Endothelial cell of umbilical vein (primary cell): ENCODE measurements at regions of chr10 and their contacts with region 1.

Region 1: GRCh38 chr10:87771871-87772500 is 46.0 kb downstream of the ATAD1 start:
- DNase-seq: peak; percentile 57
- H3K4me3 ChIP-seq: no peak overlapping the region
- H3K27ac ChIP-seq: no peak overlapping the region
- H3K4me1 ChIP-seq: peaks cover 17% of the 10 kb centered on the region
- H3K27me3 ChIP-seq: no peaks in the 10 kb centered on the region
- CTCF ChIP-seq: peak; percentile 21 to 35
- POLR2A ChIP-seq: no peak

Region 2: DNA sequence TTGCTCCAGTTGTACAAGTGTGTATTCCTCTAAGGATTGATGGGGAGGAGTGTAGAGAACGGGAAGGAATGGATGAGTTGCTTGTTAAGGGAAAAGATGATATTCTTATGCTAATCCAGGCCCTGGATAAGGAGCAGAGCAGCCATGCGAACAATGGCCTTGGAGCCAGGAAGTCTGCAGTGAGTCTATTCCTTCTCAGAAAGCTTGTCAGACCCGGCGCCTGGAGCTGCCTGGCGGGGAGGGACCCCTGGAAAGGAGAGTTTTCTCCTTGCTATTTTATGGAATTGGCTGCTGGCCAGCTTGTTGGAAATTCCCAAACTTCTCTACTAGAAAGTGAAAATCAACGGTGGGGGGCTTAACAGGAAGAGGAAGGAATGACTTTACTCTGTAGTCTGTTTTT is 903.6 kb before region 1 on chr10:
- CTCF ChIA-PET with region 1: no interaction called
- POLR2A ChIA-PET with region 1: no interaction called
- dilution Hi-C with region 1: no loop called
- intact Hi-C with region 1: no loop called
- DNase-seq: peak; percentile 94
- H3K4me3 ChIP-seq: peak overlapping the region in 1 of 3 experiments; percentile 19
- H3K27ac ChIP-seq: peak overlapping the region; percentile 36
- H3K4me1 ChIP-seq: peaks cover 18% of the 10 kb centered on the region
- H3K27me3 ChIP-seq: peaks cover 17 to 18% of the 10 kb centered on the region in 2 experiments
- CTCF ChIP-seq: no peak
- POLR2A ChIP-seq: no peak

Region 3: GRCh38 chr10:87546210-87546609 is 225.8 kb before region 1 on chr10:
- CTCF ChIA-PET with region 1: no interaction called
- POLR2A ChIA-PET with region 1: no interaction called
- dilution Hi-C with region 1: no loop called
- intact Hi-C with region 1: no loop called
- DNase-seq: no peak
- H3K4me3 ChIP-seq: no peak overlapping the region
- H3K27ac ChIP-seq: no peak overlapping the region
- H3K4me1 ChIP-seq: peaks cover 12% of the 10 kb centered on the region
- H3K27me3 ChIP-seq: no peaks in the 10 kb centered on the region
- CTCF ChIP-seq: no peak
- POLR2A ChIP-seq: no peak

Region 4: GRCh38 chr10:87734987-87735827 is 36.8 kb before region 1 on chr10:
- CTCF ChIA-PET with region 1: interaction called, 8 read pairs
- POLR2A ChIA-PET with region 1: no interaction called
- dilution Hi-C with region 1: no loop called
- intact Hi-C with region 1: loop called (anchors 2 kb)
- DNase-seq: peak; percentile 70
- H3K4me3 ChIP-seq: no peak overlapping the region
- H3K27ac ChIP-seq: no peak overlapping the region
- H3K4me1 ChIP-seq: peaks cover 9% of the 10 kb centered on the region
- H3K27me3 ChIP-seq: no peaks in the 10 kb centered on the region
- CTCF ChIP-seq: peak; percentile 49 to 68
- POLR2A ChIP-seq: no peak

Region 5: DNA sequence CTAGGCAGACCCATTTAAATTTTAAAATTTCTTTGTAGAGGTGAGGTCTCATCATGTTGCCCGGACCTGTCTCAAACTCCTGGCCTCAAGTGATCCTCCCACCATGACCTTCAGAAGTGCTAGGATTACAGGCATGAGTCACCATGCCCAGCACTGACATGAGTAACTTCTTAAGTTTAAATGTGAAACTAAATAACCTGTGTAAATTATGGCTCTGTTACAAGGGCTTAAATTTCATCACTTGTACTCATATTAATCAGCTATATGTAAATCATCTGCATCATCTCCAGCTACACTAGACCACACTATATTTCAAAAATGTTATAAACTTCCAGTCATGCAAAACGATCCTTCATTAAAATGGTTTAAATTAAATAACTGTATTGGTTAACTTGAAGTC is 10.1 kb before region 1 on chr10:
- CTCF ChIA-PET with region 1: interaction called, 23 read pairs
- POLR2A ChIA-PET with region 1: interaction called, 6 read pairs
- dilution Hi-C with region 1: no loop called
- intact Hi-C with region 1: no loop called
- DNase-seq: peak; percentile 47
- H3K4me3 ChIP-seq: no peak overlapping the region
- H3K27ac ChIP-seq: no peak overlapping the region
- H3K4me1 ChIP-seq: peaks cover 29% of the 10 kb centered on the region
- H3K27me3 ChIP-seq: no peaks in the 10 kb centered on the region
- CTCF ChIP-seq: no peak
- POLR2A ChIP-seq: no peak

Region 6: GRCh38 chr10:87817609-87818504 is 45.9 kb after region 1 on chr10 and contains the start of gene ATAD1:
- CTCF ChIA-PET with region 1: interaction called, 4 read pairs
- POLR2A ChIA-PET with region 1: no interaction called
- dilution Hi-C with region 1: no loop called
- intact Hi-C with region 1: loop called (anchors 2 kb)
- DNase-seq: peak; percentile 80
- H3K4me3 ChIP-seq: peak within 1 kb of the TSS; percentile 61 to 88 (median 78)
- H3K27ac ChIP-seq: peak within 1 kb of the TSS; percentile 68
- H3K4me1 ChIP-seq: peaks cover 22% of the 10 kb centered on the region
- H3K27me3 ChIP-seq: no peaks in the 10 kb centered on the region
- CTCF ChIP-seq: peak in 1 of 2 donors; percentile 5
- POLR2A ChIP-seq: peak; percentile 77
- total RNA-seq, gene ATAD1: 23.6 and 25.8 TPM in 2 replicates